PC-9 (cell line): ENCODE measurements at regions of chr4 and their contacts with region 1.

Region 1: DNA sequence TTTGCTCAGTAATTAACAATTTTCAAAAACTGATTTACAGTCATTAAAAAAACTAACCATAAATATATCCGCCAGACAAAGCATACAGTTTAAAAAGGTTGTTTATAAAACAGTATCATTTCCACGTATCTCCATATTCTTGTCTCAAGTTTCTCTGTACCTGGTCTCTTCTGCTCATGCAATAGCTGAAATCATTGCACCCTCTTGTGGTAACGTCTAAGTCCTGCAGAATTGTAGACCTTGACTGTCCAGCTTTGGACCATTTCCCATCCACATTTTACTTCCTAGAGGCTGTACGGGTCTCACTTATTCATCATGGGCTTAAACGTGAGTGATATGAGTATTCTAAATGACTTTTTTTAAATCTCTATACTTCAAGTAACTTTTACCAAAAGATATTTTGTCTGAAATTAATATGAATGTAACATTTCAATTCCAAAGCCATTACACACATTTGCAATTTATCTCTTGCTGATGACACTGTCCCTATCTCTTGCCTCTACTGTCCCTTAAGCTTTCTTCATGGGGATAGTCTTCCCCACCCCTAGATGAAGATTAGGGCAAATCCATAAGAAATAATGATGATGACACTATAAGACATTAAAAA is 118.5 kb downstream of the BTC start:
- DNase-seq: no peak
- H3K4me3 ChIP-seq: no peak overlapping the region
- H3K27ac ChIP-seq: no peak overlapping the region
- H3K4me1 ChIP-seq: peaks cover 6% of the 10 kb centered on the region; the same call in 1 of the 2 replicates
- H3K27me3 ChIP-seq: no peaks in the 10 kb centered on the region
- CTCF ChIP-seq: peak; percentile 75

Region 2: DNA sequence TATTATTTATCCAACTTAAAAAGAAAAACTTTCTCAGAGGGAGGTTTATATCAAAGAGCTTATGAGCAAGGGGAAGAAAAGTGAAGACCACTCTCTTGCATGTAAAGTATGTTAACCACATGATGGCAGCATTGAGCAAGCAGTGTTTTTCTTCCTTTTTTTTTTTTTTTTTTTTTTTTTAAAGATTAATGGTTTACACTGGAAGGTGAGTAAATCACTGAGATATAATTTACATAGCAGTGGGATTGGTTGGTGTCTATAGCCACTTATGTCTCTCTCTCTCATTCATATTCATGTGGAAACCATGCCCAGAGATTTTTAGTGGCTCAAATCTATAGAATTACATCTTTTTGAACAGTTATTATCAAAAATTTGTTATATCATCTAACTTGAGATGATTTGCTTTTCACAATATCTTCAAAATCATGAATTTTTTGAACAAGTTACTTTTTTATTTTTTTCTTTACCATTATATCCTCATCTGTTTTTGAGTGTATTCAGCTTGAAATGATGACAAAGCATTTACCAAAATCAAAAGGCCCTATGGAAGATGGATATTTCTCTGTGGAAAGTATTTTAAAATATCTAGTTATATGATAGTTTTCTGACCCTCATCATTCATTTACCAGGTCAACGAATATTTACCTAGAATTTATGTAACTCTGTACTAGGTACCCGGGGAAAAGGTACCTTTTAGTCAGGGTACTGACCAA is 486.3 kb before region 1 on chr4:
- CTCF ChIA-PET with region 1: interaction called, 8 read pairs
- POLR2A ChIA-PET with region 1: no interaction called
- intact Hi-C with region 1: loop called (anchors 10 kb)
- DNase-seq: peak in 1 of 2 experiments; percentile 53
- H3K4me3 ChIP-seq: no peak overlapping the region
- H3K27ac ChIP-seq: no peak overlapping the region
- H3K4me1 ChIP-seq: no peaks in the 10 kb centered on the region
- H3K27me3 ChIP-seq: no peaks in the 10 kb centered on the region
- CTCF ChIP-seq: peak; percentile 69

Region 3: DNA sequence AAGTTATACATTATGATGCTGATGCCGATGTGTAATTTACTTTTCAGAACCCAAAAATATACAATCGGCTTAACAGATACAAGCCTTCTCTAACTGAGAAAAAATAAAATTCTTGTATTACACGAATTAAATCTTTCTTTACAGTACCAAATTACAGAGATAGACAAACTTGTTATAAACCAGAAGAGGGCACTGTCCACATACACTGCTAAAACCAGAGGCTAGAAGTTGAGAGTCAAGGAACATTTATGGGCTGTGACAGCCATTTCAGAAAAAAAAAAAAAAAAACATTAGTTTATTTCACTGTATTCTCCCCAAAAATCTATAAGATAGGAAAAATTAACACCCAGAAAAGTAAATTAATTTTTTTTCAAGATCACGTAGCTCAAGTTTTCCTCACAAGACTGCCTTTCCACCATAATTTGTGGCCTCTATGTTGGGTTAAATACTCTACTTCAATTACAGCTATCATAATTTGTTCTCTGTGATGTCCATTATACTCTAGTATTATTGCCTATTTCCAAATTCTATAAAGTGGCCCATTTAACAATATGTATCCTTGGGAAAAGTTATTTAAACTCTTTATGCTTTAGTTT is 298.8 kb before region 1 on chr4:
- CTCF ChIA-PET with region 1: interaction called, 5 read pairs
- POLR2A ChIA-PET with region 1: no interaction called
- intact Hi-C with region 1: loop called (anchors 1 kb)
- DNase-seq: no peak
- H3K4me3 ChIP-seq: peak overlapping the region; percentile 55; the same call in 1 of the 2 replicates
- H3K27ac ChIP-seq: peak overlapping the region; percentile 100
- H3K4me1 ChIP-seq: peaks cover 33% of the 10 kb centered on the region
- H3K27me3 ChIP-seq: no peaks in the 10 kb centered on the region
- CTCF ChIP-seq: peak; percentile 70

Region 4: GRCh38 chr4:74531963-74532794 is 143.6 kb before region 1 on chr4:
- CTCF ChIA-PET with region 1: no interaction called
- POLR2A ChIA-PET with region 1: no interaction called
- intact Hi-C with region 1: loop called (anchors 1 kb)
- DNase-seq: peak in 1 of 2 experiments; percentile 25
- H3K4me3 ChIP-seq: no peak overlapping the region
- H3K27ac ChIP-seq: 0 out of 2 replicates have a peak overlapping the region, but pooled peaks have one; percentile 38
- H3K4me1 ChIP-seq: no peaks in the 10 kb centered on the region
- H3K27me3 ChIP-seq: no peaks in the 10 kb centered on the region
- CTCF ChIP-seq: peak; percentile 50; the same call in 1 of the 2 replicates

Region 5: GRCh38 chr4:74659576-74660411 is 16.0 kb before region 1 on chr4:
- CTCF ChIA-PET with region 1: interaction called, 8 read pairs
- POLR2A ChIA-PET with region 1: interaction called, 10 read pairs
- intact Hi-C with region 1: no loop called
- DNase-seq: peak; percentile 53 to 94
- H3K4me3 ChIP-seq: no peak overlapping the region
- H3K27ac ChIP-seq: peak overlapping the region; percentile 91
- H3K4me1 ChIP-seq: peaks cover 37% of the 10 kb centered on the region
- H3K27me3 ChIP-seq: no peaks in the 10 kb centered on the region
- CTCF ChIP-seq: no peak